ENCODE measurements at regions of chr5 and their contacts with region 1.

Region 1: GRCh38 chr5:149799119-149799623 is 69.1 kb downstream of the PPARGC1B start:
- DNase-seq: no peak
- ATAC-seq: no peak
- H3K4me3 ChIP-seq: no peak overlapping the region
- H3K27ac ChIP-seq: peak overlapping the region; percentile 18; the same call in 1 of the 2 replicates
- H3K4me1 ChIP-seq: peaks cover 31% of the 10 kb centered on the region
- H3K27me3 ChIP-seq: no peaks in the 10 kb centered on the region
- CTCF ChIP-seq: no peak
- EP300 ChIP-seq: no peak
- POLR2A ChIP-seq: no peak
- RAD21 ChIP-seq: no peak

Region 2: DNA sequence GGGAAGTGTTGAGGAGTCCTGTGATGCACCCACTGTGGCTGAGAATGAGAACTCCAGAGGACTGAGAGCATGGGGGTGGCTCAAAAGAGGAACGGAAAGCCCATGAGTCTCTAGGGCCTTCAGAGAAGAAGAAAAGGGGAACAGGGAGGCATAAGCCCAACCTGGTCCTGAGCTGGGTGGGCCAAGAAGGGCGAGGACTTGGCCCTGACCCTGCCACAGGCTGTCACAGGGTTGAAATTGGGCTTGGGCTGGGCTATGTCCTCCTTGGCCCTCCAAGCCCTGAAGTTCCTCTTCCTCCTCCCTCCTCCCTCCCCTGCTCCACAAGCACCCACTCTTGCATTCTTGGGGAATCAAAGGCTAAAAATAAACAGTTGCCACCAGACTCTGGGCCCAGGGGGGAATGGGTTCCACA is 118.4 kb before region 1 on chr5:
- CTCF ChIA-PET with region 1: interaction called, 3 read pairs
- POLR2A ChIA-PET with region 1: no interaction called
- RAD21 ChIA-PET with region 1: no interaction called
- SMC1A ChIA-PET with region 1: interaction called, 5 read pairs
- in situ Hi-C with region 1: no loop called
- intact Hi-C with region 1: loop called (anchors 1 kb)
- DNase-seq: peak; percentile 84
- ATAC-seq: peak; percentile 99
- H3K4me3 ChIP-seq: no peak overlapping the region
- H3K27ac ChIP-seq: peak overlapping the region; percentile 45
- H3K4me1 ChIP-seq: peaks cover 28% of the 10 kb centered on the region
- H3K27me3 ChIP-seq: peaks cover 0 to under 1% of the 10 kb centered on the region in 2 experiments; a peak in 1 of 4 replicates
- CTCF ChIP-seq: no peak
- EP300 ChIP-seq: peak; percentile 32 to 90; a peak in 3 of 4 replicates
- POLR2A ChIP-seq: no peak
- RAD21 ChIP-seq: no peak

Region 3: DNA sequence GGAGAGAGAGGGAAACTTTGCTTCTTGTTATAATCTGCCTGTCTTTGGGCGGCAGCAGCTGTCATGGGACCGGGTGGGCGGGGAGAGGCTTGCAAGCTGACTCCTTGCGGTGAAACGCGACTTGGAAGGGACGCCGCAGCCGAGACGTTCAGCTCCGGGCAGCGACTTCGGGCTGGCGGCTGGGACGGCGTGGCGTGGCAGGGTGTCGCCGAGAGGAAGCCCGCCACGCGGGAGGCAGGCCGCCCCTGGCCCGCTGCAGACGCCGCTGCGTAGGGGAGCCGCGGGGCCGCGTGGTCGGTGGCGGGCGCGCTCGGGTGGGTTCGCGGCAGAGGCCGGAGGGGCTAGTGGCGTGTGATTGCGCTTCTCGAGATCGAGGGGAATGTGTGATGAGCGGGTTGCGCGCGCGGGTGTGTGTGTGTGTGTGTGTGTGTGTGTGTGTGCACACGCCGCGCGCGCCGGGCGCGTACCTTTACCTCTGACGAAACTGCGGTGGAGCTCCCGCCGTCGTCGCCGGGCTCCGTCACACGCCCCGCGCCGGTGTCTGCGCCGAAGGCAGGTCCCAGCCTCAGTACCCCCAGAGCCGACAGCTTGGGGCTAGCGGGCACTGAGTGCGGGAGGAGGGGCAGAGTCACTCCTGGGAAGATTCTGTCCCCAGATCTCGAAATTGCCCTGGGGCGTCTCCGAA is 67.4 kb before region 1 on chr5:
- CTCF ChIA-PET with region 1: interaction called, 20 read pairs
- POLR2A ChIA-PET with region 1: interaction called, 48 read pairs
- RAD21 ChIA-PET with region 1: interaction called, 33 read pairs
- SMC1A ChIA-PET with region 1: interaction called, 17 read pairs
- in situ Hi-C with region 1: no loop called
- intact Hi-C with region 1: no loop called
- DNase-seq: peak; percentile 62
- ATAC-seq: peak; percentile 77
- H3K4me3 ChIP-seq: peak overlapping the region; percentile 100
- H3K27ac ChIP-seq: peak overlapping the region; percentile 82
- H3K4me1 ChIP-seq: no peaks in the 10 kb centered on the region; the same call in 1 of the 2 replicates
- H3K27me3 ChIP-seq: no peaks in the 10 kb centered on the region
- CTCF ChIP-seq: no peak
- EP300 ChIP-seq: no peak
- POLR2A ChIP-seq: peak; percentile 77
- RAD21 ChIP-seq: no peak

Region 4: GRCh38 chr5:149782018-149782894 is 16.9 kb before region 1 on chr5:
- CTCF ChIA-PET with region 1: interaction called, 67 read pairs
- POLR2A ChIA-PET with region 1: interaction called, 143 read pairs
- RAD21 ChIA-PET with region 1: interaction called, 109 read pairs
- SMC1A ChIA-PET with region 1: interaction called, 329 read pairs
- in situ Hi-C with region 1: no loop called
- intact Hi-C with region 1: no loop called
- DNase-seq: no peak
- ATAC-seq: no peak
- H3K4me3 ChIP-seq: no peak overlapping the region
- H3K27ac ChIP-seq: peak overlapping the region; percentile 13; the same call in 1 of the 2 replicates
- H3K4me1 ChIP-seq: peaks cover 48% of the 10 kb centered on the region
- H3K27me3 ChIP-seq: no peaks in the 10 kb centered on the region
- CTCF ChIP-seq: no peak
- EP300 ChIP-seq: no peak
- POLR2A ChIP-seq: no peak
- RAD21 ChIP-seq: no peak

Region 5: DNA sequence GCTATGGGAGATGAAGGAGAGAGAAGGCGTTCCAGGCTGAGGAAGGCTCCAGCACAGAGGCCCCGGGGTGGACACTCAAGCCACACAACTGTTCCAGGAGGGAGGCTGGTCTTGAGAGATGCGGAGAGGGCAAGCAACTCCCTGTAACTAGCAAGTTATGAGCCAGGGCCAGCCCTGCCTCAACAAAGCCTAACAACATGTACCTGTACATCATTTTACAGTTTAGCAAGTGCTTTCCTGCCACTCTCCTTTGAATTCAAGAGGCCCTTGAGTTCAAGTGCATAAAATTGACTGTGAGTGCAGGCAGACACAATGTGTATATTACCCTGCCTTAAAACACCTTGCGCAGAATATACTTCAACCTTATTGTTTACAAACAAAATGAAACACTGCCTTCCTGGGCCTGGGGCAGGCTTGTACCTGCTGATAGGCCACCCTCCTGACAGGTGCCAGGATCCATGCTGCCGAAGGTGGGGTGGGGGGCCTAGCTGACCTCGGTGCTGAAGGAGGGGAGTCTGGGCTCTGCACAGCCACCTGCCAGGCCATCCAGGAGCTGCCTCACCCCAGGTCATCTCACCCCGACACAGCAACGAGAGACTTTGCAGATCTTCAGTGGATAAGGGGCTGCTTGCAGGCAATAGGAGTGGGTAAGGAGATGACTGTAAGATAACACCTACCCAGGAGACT is 10.9 kb after region 1 on chr5:
- CTCF ChIA-PET with region 1: interaction called, 7 read pairs
- POLR2A ChIA-PET with region 1: interaction called, 23 read pairs
- RAD21 ChIA-PET with region 1: interaction called, 11 read pairs
- SMC1A ChIA-PET with region 1: interaction called, 89 read pairs
- in situ Hi-C with region 1: no loop called
- intact Hi-C with region 1: no loop called
- DNase-seq: no peak
- ATAC-seq: no peak
- H3K4me3 ChIP-seq: no peak overlapping the region
- H3K27ac ChIP-seq: peak overlapping the region; percentile 55
- H3K4me1 ChIP-seq: peaks cover 43% of the 10 kb centered on the region
- H3K27me3 ChIP-seq: no peaks in the 10 kb centered on the region
- CTCF ChIP-seq: no peak
- EP300 ChIP-seq: no peak
- POLR2A ChIP-seq: no peak
- RAD21 ChIP-seq: no peak

Region 6: DNA sequence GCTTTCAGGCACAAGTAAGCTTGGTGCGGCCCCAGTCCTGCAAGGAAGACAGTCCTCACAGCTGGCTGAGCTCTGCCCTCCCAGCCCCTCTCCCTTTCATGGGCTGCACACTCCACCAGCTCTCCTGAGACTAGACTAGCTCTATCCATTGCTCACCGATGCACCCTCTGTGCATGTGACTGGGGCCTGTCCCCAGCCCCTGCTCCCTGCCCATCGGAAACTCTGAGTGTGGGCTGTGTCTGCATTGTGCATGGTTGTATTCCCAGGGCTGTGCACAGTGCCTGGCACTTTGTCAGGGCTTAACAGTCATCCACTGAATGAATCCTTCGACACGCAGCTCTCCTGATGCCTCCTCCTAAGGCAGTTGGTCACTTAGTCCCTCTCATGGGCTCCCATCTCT is 23.1 kb after region 1 on chr5:
- CTCF ChIA-PET with region 1: no interaction called
- POLR2A ChIA-PET with region 1: interaction called, 70 read pairs
- RAD21 ChIA-PET with region 1: interaction called, 139 read pairs
- SMC1A ChIA-PET with region 1: interaction called, 45 read pairs
- in situ Hi-C with region 1: no loop called
- intact Hi-C with region 1: no loop called
- DNase-seq: no peak
- ATAC-seq: no peak
- H3K4me3 ChIP-seq: no peak overlapping the region
- H3K27ac ChIP-seq: no peak overlapping the region
- H3K4me1 ChIP-seq: no peaks in the 10 kb centered on the region
- H3K27me3 ChIP-seq: no peaks in the 10 kb centered on the region
- CTCF ChIP-seq: no peak
- EP300 ChIP-seq: no peak
- POLR2A ChIP-seq: no peak
- RAD21 ChIP-seq: no peak

Region 7: GRCh38 chr5:149913436-149914419 is 114.6 kb after region 1 on chr5:
- CTCF ChIA-PET with region 1: no interaction called
- POLR2A ChIA-PET with region 1: no interaction called
- RAD21 ChIA-PET with region 1: no interaction called
- SMC1A ChIA-PET with region 1: no interaction called
- in situ Hi-C with region 1: no loop called
- intact Hi-C with region 1: no loop called
- DNase-seq: no peak
- ATAC-seq: peak; percentile 62
- H3K4me3 ChIP-seq: no peak overlapping the region
- H3K27ac ChIP-seq: no peak overlapping the region
- H3K4me1 ChIP-seq: peaks cover 3% of the 10 kb centered on the region; the same call in 1 of the 2 replicates
- H3K27me3 ChIP-seq: no peaks in the 10 kb centered on the region; a peak in 1 of 4 replicates
- CTCF ChIP-seq: no peak
- EP300 ChIP-seq: no peak
- POLR2A ChIP-seq: no peak
- RAD21 ChIP-seq: no peak

Region 8: GRCh38 chr5:151157426-151158286 is 1358.5 kb after region 1 on chr5 and contains the start of gene ANXA6:
- CTCF ChIA-PET with region 1: no interaction called
- POLR2A ChIA-PET with region 1: no interaction called
- RAD21 ChIA-PET with region 1: no interaction called
- SMC1A ChIA-PET with region 1: no interaction called
- in situ Hi-C with region 1: no loop called
- intact Hi-C with region 1: loop called (anchors 10 kb)
- DNase-seq: no peak
- ATAC-seq: peak; percentile 77
- H3K4me3 ChIP-seq: peak within 1 kb of the TSS; percentile 97
- H3K27ac ChIP-seq: peak within 1 kb of the TSS; percentile 89
- H3K4me1 ChIP-seq: peaks cover 26% of the 10 kb centered on the region
- H3K27me3 ChIP-seq: no peaks in the 10 kb centered on the region
- CTCF ChIP-seq: no peak
- EP300 ChIP-seq: no peak
- POLR2A ChIP-seq: peak; percentile 81
- RAD21 ChIP-seq: no peak
- polyA plus RNA-seq, gene ANXA6: 44.0 to 73.1 TPM

Measured in GM12878 (cell line).